Colonic mucosa (tissue), 4 donors: ENCODE measurements at regions of chr11 and their contacts with region 1.

Region 1: DNA sequence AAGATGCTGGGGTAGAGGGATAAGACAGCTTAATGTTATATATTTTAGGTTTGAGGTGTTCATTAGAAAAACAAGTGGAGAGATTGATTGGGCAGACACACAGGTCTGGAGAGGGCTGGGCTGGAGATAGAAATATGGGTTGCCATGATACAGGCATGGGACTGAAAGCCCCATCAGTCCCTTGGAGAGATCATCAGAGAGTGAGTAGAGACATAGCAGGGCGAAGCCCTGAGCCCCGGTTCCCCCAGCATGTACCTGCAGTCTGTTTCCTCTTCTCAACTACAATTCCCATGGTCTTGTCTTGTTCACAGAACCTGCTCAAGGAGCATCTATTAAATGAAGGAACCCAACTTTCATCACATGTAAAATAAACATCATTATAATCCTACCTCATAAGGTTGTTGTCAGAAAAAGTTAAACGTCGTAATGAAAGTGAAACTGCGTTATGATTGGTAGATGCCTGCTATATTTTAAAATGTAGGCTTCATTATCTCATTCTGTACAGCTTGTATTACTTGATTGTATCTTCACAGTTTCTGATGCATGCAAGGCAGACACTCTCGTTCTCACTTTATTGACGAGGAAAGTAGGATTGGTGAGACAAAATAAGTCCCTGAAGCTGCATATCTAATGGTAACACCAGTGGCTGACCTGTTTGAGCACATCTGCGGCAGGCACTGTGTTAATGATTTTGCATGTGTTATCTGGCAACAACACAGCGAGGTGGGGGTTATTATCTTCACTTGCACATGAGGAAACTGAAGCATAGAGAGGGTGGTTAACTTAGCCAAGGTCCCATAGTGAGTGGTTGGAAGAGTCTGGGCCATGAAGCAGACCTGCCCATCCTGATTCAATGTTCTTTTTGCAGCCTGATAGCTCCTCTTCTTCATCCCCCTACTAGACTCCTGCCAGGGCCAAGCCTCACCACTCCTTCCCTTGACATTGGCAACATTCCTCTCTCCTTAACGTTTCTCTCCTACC is 63.5 kb downstream of the ENDOD1 start:
- DNase-seq: no peak
- H3K4me3 ChIP-seq: peak overlapping the region; percentile 1
- H3K27ac ChIP-seq: no peak overlapping the region
- H3K4me1 ChIP-seq: peaks cover 3% of the 10 kb centered on the region
- H3K27me3 ChIP-seq: no peaks in the 10 kb centered on the region
- CTCF ChIP-seq: no peak

Region 2: DNA sequence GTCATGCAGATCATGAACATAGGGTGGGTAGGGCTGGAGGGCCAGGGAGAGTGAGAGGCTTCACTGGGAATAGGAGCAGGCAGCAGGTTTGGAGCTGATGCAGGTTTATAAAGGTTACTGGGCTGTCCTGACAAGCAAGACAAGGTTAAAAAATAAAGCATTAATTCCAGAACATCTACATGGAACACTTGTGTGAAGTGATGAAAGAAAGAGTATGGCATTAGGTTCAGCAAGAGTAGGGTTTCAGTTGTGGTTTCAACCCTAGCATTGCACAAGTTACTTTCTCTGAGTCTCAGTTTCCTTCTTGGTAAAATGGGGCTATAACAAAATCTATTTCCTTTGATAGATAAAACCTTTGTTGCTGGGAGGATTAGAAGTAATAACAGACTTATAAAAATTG is 192.5 kb after region 1 on chr11:
- intact Hi-C with region 1: no loop called
- DNase-seq: no peak
- H3K4me3 ChIP-seq: no peak overlapping the region
- H3K27ac ChIP-seq: no peak overlapping the region
- H3K4me1 ChIP-seq: no peaks in the 10 kb centered on the region
- H3K27me3 ChIP-seq: no peaks in the 10 kb centered on the region
- CTCF ChIP-seq: no peak

Region 3: GRCh38 chr11:95705485-95706124 is 552.4 kb after region 1 on chr11:
- intact Hi-C with region 1: loop called (anchors 2 kb)
- DNase-seq: peak; percentile 91
- H3K4me3 ChIP-seq: no peak overlapping the region
- H3K27ac ChIP-seq: no peak overlapping the region
- H3K4me1 ChIP-seq: no peaks in the 10 kb centered on the region
- H3K27me3 ChIP-seq: no peaks in the 10 kb centered on the region
- CTCF ChIP-seq: peak; percentile 92